ENCODE measurements at regions of chr6 and their contacts with region 1.

Region 1: GRCh38 chr6:44387346-44388133 is at the start of gene CDC5L:
- DNase-seq: peak; percentile 95
- ATAC-seq: peak; percentile 95
- H3K4me3 Mint-ChIP-seq: peak within 1 kb of the TSS; percentile 97
- H3K27ac Mint-ChIP-seq: peak within 1 kb of the TSS; percentile 98
- H3K4me1 Mint-ChIP-seq: peaks cover 31% of the 10 kb centered on the region
- H3K27me3 Mint-ChIP-seq: no peaks in the 10 kb centered on the region
- total RNA-seq, gene CDC5L: 25.1 to 28.9 TPM

Region 2: GRCh38 chr6:43575772-43576551 is 811.6 kb before region 1 on chr6 and contains the starts of genes POLH and XPO5:
- CTCF ChIA-PET with region 1: no interaction called
- POLR2A ChIA-PET with region 1: no interaction called
- intact Hi-C with region 1: loop called in 1 of 2 experiments (anchors 5 kb)
- DNase-seq: peak; percentile 95
- ATAC-seq: peak; percentile 91
- H3K4me3 Mint-ChIP-seq: peak within 1 kb of the TSS; percentile 90
- H3K27ac Mint-ChIP-seq: peak within 1 kb of the TSS; percentile 86
- H3K4me1 Mint-ChIP-seq: peaks cover 44% of the 10 kb centered on the region
- H3K27me3 Mint-ChIP-seq: no peaks in the 10 kb centered on the region
- total RNA-seq, gene POLH: 35.2 to 37.9 TPM
- total RNA-seq, gene XPO5: 108 to 109 TPM

Region 3: DNA sequence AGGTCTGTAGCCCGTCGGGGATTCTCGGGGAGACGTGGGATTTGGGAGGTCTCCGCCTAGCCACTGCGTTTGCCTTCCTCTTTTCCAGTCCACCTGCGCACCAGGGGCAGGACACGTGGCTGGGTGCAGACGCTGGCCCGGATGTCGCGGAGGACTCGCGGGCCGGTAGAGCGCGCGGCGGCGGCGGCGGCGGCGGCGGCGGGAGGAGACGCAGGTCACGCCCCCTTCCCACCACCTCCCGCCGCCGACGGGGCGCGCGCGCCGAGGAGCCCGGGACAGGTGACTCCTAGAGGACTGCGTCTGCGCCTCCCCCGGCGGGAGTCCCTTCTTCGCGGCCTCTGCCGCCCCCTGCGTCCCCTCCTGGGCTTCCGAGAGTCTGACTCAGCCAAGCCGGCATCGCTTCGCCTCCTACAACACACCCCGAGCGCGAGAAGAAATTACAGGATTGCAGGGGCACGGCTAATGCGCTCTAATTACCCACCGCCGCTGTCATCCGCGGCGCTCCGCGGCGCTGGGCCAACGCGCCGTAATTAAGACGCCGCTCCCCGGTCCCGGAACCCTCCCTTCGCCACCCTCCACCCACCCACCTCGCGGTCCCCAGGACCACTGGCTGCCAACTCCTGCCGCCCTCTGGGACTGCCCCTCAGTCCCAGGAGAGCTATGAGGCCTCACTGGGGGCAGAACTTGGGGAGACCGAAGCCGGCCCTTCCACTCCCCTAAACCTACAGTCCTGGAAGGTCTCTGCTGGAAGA is 384.8 kb before region 1 on chr6:
- CTCF ChIA-PET with region 1: no interaction called
- POLR2A ChIA-PET with region 1: no interaction called
- intact Hi-C with region 1: loop called in 1 of 2 experiments (anchors 1 kb)
- DNase-seq: peak; percentile 87
- ATAC-seq: peak; percentile 65
- H3K4me3 Mint-ChIP-seq: peak overlapping the region; percentile 58
- H3K27ac Mint-ChIP-seq: no peak overlapping the region
- H3K4me1 Mint-ChIP-seq: peaks cover 11% of the 10 kb centered on the region
- H3K27me3 Mint-ChIP-seq: peaks cover 16% of the 10 kb centered on the region

Region 4: DNA sequence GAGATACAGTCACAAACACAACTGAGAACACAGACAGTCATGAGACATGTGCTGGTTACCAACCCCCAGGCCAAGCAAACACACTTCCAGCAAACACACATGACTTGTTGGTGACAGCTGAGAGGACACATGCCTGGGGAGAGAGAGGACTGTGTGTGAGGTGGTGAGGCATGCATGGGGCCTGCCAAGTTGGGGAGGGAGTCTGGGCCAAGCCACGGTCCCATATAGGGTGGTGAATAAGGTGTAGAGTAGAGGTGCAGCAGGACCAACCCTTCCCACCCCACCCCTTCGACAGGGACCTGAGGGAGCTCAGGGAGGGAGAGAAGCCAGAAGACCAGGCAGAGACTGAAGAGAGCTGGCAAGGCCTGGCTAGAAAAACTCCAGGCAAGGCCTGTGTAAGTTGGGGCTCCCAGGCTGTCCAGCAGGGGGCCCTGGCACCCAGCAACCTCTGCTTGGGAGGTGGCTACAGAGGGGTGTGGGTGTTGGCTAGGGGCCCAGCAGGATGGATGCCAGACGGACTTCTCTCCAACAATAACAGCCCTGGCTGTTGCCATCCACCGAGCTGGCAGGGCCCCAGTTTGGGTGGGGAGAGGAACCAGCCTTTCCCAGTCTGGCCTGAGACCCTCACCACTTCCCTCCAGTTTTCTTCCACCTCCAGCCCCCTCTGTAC is 166.1 kb before region 1 on chr6:
- CTCF ChIA-PET with region 1: no interaction called
- POLR2A ChIA-PET with region 1: no interaction called
- intact Hi-C with region 1: loop called in 1 of 2 experiments (anchors 1 kb)
- DNase-seq: peak; percentile 90
- ATAC-seq: peak; percentile 70
- H3K4me3 Mint-ChIP-seq: peak overlapping the region; percentile 10
- H3K27ac Mint-ChIP-seq: peak overlapping the region; percentile 69
- H3K4me1 Mint-ChIP-seq: peaks cover 48% of the 10 kb centered on the region
- H3K27me3 Mint-ChIP-seq: peaks cover 3% of the 10 kb centered on the region

Region 5: DNA sequence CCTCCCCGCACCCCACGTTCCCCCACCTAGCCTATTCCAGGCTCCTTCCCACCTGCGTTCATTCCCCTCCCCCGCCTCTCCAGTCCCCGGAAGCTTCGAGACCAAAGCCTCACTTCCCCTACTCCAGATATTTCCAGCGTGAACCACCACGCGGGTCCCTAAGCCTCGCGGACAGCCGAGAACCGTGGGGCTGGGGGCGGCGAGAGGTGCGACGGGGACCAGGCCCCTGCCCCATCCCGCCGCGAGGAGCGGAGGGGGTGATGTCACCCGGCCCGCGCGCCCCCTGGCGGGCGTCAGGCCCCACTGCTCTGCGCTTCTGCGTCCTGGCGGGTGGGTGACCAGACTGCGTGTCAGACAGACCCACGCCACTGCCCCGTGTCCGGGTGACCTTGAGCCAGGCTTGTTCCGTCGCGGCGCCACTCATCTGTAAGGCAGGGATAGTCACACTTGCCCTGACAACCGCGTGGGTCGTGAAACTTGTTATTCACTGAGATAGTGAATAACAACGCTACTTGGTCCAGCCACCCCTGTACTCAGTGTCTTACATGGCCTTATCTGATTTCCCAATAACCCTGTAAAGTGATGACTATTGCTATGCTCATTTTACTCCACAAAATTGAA is 149.6 kb before region 1 on chr6:
- CTCF ChIA-PET with region 1: no interaction called
- POLR2A ChIA-PET with region 1: no interaction called
- intact Hi-C with region 1: loop called in 1 of 2 experiments (anchors 2 kb)
- DNase-seq: peak; percentile 88
- ATAC-seq: peak; percentile 78
- H3K4me3 Mint-ChIP-seq: peak overlapping the region; percentile 75
- H3K27ac Mint-ChIP-seq: peak overlapping the region; percentile 94
- H3K4me1 Mint-ChIP-seq: peaks cover 31% of the 10 kb centered on the region
- H3K27me3 Mint-ChIP-seq: no peaks in the 10 kb centered on the region

Region 6: GRCh38 chr6:44246663-44247337 is 140.7 kb before region 1 on chr6 and contains the start of gene HSP90AB1:
- CTCF ChIA-PET with region 1: no interaction called
- POLR2A ChIA-PET with region 1: interaction called, 3 read pairs
- intact Hi-C with region 1: loop called in 1 of 2 experiments (anchors 1 kb)
- DNase-seq: peak; percentile 98
- ATAC-seq: peak; percentile 86
- H3K4me3 Mint-ChIP-seq: peak within 1 kb of the TSS; percentile 97
- H3K27ac Mint-ChIP-seq: peak within 1 kb of the TSS; percentile 99
- H3K4me1 Mint-ChIP-seq: peaks cover 44% of the 10 kb centered on the region
- H3K27me3 Mint-ChIP-seq: no peaks in the 10 kb centered on the region
- total RNA-seq, gene HSP90AB1: 2,120 to 2,263 TPM

Region 7: GRCh38 chr6:44312901-44313788 is 74.4 kb before region 1 on chr6 and contains the start of gene AARS2:
- CTCF ChIA-PET with region 1: interaction called, 5 read pairs
- POLR2A ChIA-PET with region 1: no interaction called
- intact Hi-C with region 1: loop called in 1 of 2 experiments (anchors 1 kb)
- DNase-seq: peak; percentile 96
- ATAC-seq: peak; percentile 96
- H3K4me3 Mint-ChIP-seq: peak within 1 kb of the TSS; percentile 98
- H3K27ac Mint-ChIP-seq: peak within 1 kb of the TSS; percentile 86
- H3K4me1 Mint-ChIP-seq: peaks cover 14% of the 10 kb centered on the region
- H3K27me3 Mint-ChIP-seq: peaks cover 1% of the 10 kb centered on the region
- total RNA-seq, gene AARS2: 15.2 to 17.5 TPM

Region 8: DNA sequence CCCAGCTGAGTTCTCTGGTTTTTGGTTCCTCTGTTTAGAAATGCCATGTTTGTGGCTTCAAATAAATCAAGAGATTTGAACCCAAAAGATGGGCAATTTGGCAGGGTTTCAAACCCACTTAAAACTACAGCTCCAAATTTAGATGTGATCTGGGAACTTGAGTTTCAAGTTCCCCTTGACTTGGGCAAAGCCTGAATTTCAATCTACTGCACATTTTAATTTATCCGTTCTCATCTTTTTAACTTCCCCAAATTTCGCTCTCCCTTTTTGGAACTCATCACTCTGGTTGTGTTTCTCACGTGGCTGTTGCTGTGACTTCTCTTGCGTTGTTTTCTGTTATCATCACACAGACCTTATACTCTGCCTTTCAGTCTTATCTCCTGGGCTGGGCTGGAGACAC is 230.8 kb after region 1 on chr6:
- CTCF ChIA-PET with region 1: no interaction called
- POLR2A ChIA-PET with region 1: no interaction called
- intact Hi-C with region 1: no loop called
- DNase-seq: no peak
- ATAC-seq: no peak
- H3K4me3 Mint-ChIP-seq: no peak overlapping the region
- H3K27ac Mint-ChIP-seq: no peak overlapping the region
- H3K4me1 Mint-ChIP-seq: no peaks in the 10 kb centered on the region
- H3K27me3 Mint-ChIP-seq: peaks cover 2% of the 10 kb centered on the region